ENCODE measurements at regions of chr5 and their contacts with region 1.

Region 1: GRCh38 chr5:60944904-60945812 is at the starts of genes ERCC8 and NDUFAF2:
- DNase-seq: peak; percentile 78 to 95 (median 94)
- H3K4me3 ChIP-seq: peak within 1 kb of the TSS; percentile 66 to 96 (median 84)
- H3K27ac ChIP-seq: peak within 1 kb of the TSS in 54 of 59 donors; percentile 2 to 86 (median 61)
- H3K27me3 ChIP-seq: no peaks in the 10 kb centered on the region
- CTCF ChIP-seq: peak in 9 of 56 donors; percentile 2 to 22 (median 10)
- total RNA-seq, gene ERCC8: 6.6 to 17.2 (median 11.7) TPM
- total RNA-seq, gene NDUFAF2: 16.3 to 46.2 (median 29.1) TPM

Region 2: GRCh38 chr5:60633341-60633740 is 311.8 kb before region 1 on chr5:
- intact Hi-C with region 1: no loop called
- DNase-seq: no peak
- H3K4me3 ChIP-seq: no peak overlapping the region
- H3K27ac ChIP-seq: peak overlapping the region in 1 of 59 donors; percentile 11
- H3K27me3 ChIP-seq: no peaks in the 10 kb centered on the region
- CTCF ChIP-seq: no peak

Region 3: GRCh38 chr5:60687927-60688720 is 257.0 kb before region 1 on chr5:
- intact Hi-C with region 1: loop called in 1 of 2 experiments (anchors 10 kb)
- DNase-seq: no peak
- H3K4me3 ChIP-seq: no peak overlapping the region
- H3K27ac ChIP-seq: no peak overlapping the region
- H3K27me3 ChIP-seq: no peaks in the 10 kb centered on the region
- CTCF ChIP-seq: peak in 7 of 56 donors; percentile 11 to 34 (median 16)

Region 4: DNA sequence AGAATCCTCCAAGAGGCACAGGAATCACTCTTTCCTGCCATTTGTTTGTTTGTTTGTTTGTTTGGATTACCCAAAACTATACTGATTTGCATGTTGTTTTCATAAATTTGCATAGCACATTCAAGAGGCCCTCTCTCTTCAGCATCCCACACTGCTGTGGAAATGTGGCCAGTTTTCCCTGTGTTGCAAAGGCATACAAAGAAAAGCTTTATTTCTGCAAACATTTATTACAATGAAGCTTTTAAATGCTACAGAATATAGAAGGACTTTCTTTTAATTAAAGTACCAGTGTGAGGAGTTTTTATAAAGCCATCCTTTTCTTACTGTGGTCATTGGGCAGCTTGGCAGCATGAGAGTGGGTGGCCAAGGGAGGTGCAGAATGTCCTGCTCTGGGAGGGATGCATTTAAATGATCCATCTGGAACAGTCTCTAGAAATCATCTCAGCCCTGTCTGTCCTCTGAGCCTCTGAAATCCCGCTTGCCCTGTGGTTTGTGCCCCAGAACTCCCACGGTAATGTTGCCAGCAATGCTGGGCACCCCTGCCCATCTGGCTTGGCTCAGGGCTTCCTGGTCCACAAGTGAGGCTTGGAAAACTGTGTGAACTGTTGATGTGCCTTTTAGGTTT is 1004.0 kb after region 1 on chr5:
- intact Hi-C with region 1: loop called in 1 of 2 experiments (anchors 5 kb)
- DNase-seq: peak in 9 of 10 donors; percentile 10 to 66 (median 49)
- H3K4me3 ChIP-seq: peak overlapping the region in 1 of 59 donors; percentile 17
- H3K27ac ChIP-seq: peak overlapping the region in 55 of 59 donors; percentile 0 to 86 (median 63)
- H3K27me3 ChIP-seq: no peaks in the 10 kb centered on the region
- CTCF ChIP-seq: peak in 1 of 56 donors; percentile 11